Common myeloid progenitor, CD34-positive (primary cell): ENCODE measurements at regions of chr17 and their contacts with region 1.

Region 1: GRCh38 chr17:56125830-56126819 is 27.1 kb upstream of the ANKFN1 start:
- DNase-seq: peak; percentile 59 to 77 (median 69)
- H3K4me3 ChIP-seq: no peak overlapping the region
- H3K27ac ChIP-seq: no peak overlapping the region
- H3K4me1 ChIP-seq: no peaks in the 10 kb centered on the region
- H3K27me3 ChIP-seq: no peaks in the 10 kb centered on the region

Region 2: DNA sequence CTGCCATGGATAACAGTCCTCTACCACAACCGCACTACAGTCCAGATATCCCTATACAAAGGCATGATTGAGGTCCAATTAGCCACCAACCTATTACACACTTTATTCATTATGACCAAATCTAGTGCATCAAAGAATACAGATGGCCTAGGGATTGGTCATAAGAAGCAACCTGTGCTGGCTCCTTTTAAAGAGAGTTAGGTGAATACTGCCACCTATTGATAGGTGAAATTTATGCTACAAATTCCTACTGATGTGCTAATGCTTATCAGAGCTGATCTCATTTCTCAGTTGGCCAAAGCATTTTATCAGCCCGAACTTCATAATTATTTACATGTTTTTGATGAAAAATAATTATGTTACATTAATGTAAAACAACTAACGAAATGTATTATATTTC is 193.4 kb after region 1 on chr17:
- CTCF ChIA-PET with region 1: interaction called, 23 read pairs
- POLR2A ChIA-PET with region 1: no interaction called
- DNase-seq: peak; percentile 69 to 81 (median 79)
- H3K4me3 ChIP-seq: no peak overlapping the region
- H3K27ac ChIP-seq: no peak overlapping the region
- H3K4me1 ChIP-seq: peaks cover 0 to 8% (median 4%) of the 10 kb centered on the region in 4 experiments
- H3K27me3 ChIP-seq: no peaks in the 10 kb centered on the region